Right ventricle myocardium inferior (tissue), 1 donor: ENCODE measurements at regions of chr2 and their contacts with region 1.

Region 1: DNA sequence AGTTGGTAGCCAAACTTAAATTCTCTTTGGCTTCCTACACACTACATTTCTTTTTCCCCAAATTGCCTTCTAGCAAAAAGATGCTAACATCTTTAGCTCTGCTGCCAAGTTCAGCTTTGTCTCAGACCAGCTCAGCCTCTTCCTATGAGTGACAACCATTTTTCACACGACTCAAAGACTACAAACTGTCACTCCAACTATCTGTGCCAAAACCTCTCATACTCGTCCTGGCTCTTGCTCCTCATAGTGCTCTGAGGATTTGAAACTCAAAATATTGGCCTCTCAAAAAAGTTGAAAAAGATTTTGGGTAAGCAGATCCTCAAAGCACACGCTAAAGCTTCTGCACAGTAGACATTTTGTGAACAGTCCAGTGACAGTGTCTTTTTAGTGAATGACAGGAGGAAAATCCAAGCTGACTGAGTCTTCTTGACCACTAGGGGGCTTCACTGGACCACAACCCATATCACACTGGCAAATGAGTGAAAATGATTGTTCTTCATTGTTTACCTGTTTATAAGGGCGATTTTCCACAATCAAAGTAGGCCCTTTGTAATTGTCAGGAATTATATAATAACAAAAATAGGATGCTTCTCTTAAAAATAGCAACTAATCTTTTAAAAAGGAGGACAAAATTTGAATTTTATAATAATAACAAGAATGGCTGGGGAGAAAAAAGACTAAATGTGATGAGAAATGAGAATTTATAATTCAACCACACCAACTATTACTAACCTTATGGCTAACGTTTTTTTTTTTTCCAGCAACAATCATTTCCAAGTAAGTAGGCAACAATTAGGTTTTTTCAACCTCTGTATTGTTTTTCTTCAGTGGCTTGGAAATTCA is 85.5 kb upstream of the PGAP1 start:
- DNase-seq: no peak
- ATAC-seq: peak; percentile 65

Region 2: GRCh38 chr2:197121255-197121654 is 109.2 kb after region 1 on chr2:
- intact Hi-C with region 1: no loop called
- DNase-seq: no peak
- ATAC-seq: no peak

Region 3: DNA sequence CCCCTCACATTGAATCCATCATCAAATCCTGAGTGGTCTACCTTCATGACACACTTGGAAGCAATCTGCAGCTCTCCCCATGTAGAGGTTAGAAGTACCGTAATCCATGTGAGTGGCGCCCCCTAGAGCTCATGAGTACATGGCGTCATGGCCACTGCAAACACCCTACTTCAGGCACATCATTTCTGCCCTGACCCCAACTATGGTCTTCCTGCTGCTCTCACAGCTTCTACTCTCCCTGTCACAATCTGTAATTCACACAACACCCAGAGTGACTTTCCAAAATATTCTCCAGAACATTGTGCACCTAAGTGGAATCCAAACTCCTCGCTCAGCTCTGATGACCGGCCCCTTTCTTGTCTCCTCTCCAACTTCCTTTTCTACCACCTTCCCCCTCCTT is 156.7 kb after region 1 on chr2:
- intact Hi-C with region 1: loop called (anchors 1 kb)
- DNase-seq: peak; percentile 73
- ATAC-seq: peak; percentile 52

Region 4: DNA sequence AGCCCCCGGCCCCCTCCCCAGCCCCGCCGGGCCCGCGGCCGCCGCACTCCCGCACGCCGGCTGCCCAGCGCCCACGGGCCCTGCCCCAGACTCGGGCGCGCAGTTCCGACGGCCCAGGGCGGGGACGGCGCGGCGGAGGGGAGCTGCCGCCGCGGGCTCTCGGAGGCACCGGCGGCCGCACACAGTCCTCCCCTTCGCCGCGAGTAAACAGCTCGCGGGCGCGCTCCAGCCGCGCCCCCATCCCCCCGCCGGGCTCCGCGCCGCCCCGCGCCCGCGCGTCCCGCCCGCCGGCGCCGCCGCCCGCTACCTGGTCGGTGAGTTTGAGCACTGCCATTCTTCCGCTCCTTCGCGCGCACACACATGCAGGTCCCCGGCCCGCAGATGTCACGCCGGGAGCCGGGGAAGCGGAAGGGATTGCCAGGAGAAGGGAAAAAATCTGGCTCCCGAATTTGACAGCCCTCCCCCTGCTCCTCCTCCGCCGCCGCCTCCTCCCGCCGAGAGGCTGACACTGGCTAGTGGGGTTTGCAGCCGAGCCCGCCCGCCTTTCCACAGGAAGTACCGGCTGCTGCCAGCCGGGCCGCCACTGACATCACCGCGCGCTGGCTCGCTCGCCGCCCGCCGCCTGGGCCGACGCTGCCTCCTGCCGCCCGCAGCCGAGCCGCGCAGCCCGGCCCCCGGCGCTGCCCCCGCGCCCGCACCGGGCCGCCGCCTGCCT is 298.4 kb after region 1 on chr2 and contains the start of gene ANKRD44:
- intact Hi-C with region 1: loop called (anchors 5 kb)
- DNase-seq: peak; percentile 97
- ATAC-seq: peak; percentile 98
- total RNA-seq, gene ANKRD44: 10.5 TPM

Region 5: GRCh38 chr2:197322143-197322542 is 310.1 kb after region 1 on chr2:
- intact Hi-C with region 1: no loop called
- DNase-seq: no peak
- ATAC-seq: no peak

Region 6: GRCh38 chr2:197378494-197379307 is 366.7 kb after region 1 on chr2:
- intact Hi-C with region 1: loop called (anchors 1 kb)
- DNase-seq: no peak
- ATAC-seq: peak; percentile 48